HEK293T (cell line): ENCODE measurements at regions of chr12 and their contacts with region 1.

Region 1: DNA sequence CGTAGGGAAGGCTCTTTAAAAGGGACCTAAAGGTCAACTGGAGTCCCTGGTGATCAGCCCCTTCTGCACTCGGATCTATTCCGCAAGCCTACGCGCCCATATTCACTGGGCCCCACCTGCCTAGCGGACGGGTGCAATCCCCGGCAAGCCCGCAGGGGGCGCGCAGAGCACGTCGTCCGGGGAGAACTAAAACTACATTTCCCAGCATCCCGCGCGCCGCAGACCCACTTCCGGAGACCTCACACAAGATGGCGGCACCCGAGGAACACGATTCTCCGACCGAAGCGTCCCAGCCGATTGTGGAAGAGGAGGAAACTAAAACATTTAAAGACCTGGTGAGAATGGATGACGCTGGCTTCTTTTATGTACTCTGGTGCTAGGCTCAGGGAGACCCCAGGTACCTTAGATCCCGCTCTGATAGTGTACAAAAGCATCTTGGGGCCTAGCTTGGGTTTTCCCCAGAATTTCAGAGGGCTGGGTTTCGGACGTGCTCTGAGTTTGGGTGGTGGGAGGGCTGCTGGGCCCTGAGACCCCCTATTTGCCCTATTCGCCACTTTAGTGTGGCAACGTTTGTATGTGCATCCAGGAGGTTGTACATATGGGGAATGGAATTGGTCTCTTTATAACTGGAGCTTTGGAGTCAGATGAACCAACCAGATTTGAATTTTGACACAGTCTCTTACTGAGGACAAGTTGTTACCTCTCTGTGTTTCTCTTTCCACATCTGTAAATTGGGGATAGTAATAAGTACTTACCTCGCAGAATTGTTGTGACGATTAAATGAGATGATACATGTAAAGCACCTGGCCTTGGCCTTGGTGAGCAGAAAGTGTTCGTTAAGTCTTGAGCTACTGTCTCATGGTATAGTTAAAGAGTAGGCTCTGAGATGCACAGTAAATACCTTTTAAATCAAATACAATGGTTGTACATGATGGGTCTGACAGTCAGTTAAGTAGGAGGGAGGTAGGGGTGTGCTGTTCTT is at the start of gene DDX47:
- DNase-seq: peak; percentile 95

Region 2: GRCh38 chr12:12770262-12770661 is 43.1 kb before region 1 on chr12:
- CTCF ChIA-PET with region 1: no interaction called
- POLR2A ChIA-PET with region 1: no interaction called
- DNase-seq: no peak

Region 3: GRCh38 chr12:12786716-12787601 is 26.5 kb before region 1 on chr12:
- CTCF ChIA-PET with region 1: interaction called, 4 read pairs
- POLR2A ChIA-PET with region 1: interaction called, 11 read pairs
- DNase-seq: peak; percentile 96

Region 4: DNA sequence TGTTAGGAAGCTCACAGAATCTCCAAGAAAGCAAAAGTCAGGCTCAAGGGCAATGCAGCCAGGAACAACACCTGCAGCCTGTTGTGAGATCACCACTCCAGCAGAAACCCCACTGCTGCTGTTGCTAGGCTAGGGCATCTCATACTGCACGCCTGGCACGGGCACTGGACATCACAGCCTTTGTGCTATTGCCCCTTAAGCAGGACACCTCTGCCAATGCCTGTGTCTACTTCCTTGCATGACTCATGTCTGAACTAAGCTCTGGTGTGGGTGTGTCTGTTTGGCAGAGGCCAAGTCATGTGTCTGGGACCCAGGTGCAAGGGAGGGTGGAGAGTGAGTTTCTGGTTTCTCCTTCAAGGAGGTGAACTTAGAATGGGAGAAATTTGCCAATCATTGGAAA is 10.2 kb before region 1 on chr12:
- CTCF ChIA-PET with region 1: interaction called, 13 read pairs
- POLR2A ChIA-PET with region 1: no interaction called
- DNase-seq: peak; percentile 41

Region 5: DNA sequence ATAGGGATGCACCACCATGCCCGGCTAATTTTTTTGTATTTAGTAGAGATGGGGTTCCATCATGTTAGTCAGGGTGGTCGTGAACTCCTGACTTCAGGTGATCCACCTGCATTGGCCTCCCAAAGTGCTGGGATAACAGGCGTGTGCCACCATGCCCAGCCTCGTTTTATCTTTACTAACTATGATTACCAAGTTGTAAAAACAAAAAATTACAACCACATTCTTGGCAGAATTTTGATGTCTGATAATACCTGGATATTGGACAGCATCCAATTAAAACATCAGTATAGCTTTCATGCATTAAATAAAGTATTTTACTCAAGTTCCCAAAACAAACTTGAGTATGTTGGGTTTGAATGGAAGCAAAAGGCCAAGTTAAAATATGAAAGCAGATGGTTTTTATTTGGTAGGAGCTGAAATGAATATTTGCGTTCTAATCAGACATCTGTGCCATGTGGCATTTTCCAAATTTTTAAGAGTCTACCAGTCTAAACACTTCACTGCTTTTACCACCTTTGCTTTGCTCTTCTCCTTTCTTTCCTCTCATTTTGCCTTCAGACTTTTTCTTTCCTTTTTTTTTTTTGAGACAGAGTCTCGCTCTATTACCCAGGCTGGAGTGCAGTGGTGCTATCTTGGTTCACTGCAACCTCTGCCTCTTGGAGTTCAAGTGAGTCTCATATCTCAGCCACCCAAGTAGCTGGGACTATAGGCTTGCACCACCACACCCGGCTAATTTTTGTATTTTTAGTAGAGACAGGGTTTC is 31.8 kb after region 1 on chr12:
- CTCF ChIA-PET with region 1: no interaction called
- POLR2A ChIA-PET with region 1: no interaction called
- DNase-seq: no peak